ENCODE measurements at regions of chrX and their contacts with region 1.

Region 1: GRCh38 chrX:86047174-86047935 is at the start of gene CHM:
- DNase-seq: peak; percentile 60
- H3K4me3 Mint-ChIP-seq: no peak within 1 kb of the TSS
- H3K27ac Mint-ChIP-seq: no peak within 1 kb of the TSS
- H3K4me1 Mint-ChIP-seq: peaks cover 5% of the 10 kb centered on the region
- H3K27me3 Mint-ChIP-seq: no peaks in the 10 kb centered on the region
- CTCF ChIP-seq: no peak
- total RNA-seq, gene CHM: 21.0 and 24.3 TPM in 2 replicates

Region 2: DNA sequence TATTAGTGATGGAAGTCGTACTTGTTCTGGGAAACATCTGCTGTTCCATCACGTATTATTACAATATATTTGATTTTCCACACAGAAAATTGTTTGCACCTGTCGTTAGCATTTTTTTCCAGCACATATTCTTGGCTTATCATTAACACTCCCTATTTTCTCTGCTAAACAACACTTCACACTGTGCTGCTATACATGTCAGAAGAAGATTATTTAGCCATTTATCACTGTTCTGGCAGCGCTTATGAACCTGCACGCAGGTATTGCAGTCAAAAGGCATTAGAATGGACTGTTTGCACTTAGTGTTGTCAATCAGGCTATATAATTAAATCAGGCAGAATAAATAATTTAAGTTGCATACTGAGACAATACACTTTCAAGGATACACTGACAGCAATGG is 218.6 kb before region 1 on chrX:
- CTCF ChIA-PET with region 1: no interaction called
- intact Hi-C with region 1: no loop called
- DNase-seq: no peak
- H3K4me3 Mint-ChIP-seq: no peak overlapping the region
- H3K27ac Mint-ChIP-seq: no peak overlapping the region
- H3K4me1 Mint-ChIP-seq: no peaks in the 10 kb centered on the region
- H3K27me3 Mint-ChIP-seq: no peaks in the 10 kb centered on the region
- CTCF ChIP-seq: no peak

Region 3: GRCh38 chrX:85859426-85859825 is 187.9 kb before region 1 on chrX:
- CTCF ChIA-PET with region 1: no interaction called
- intact Hi-C with region 1: loop called (anchors 5 kb)
- DNase-seq: no peak
- H3K4me3 Mint-ChIP-seq: no peak overlapping the region
- H3K27ac Mint-ChIP-seq: no peak overlapping the region
- H3K4me1 Mint-ChIP-seq: no peaks in the 10 kb centered on the region
- H3K27me3 Mint-ChIP-seq: no peaks in the 10 kb centered on the region
- CTCF ChIP-seq: no peak

Region 4: DNA sequence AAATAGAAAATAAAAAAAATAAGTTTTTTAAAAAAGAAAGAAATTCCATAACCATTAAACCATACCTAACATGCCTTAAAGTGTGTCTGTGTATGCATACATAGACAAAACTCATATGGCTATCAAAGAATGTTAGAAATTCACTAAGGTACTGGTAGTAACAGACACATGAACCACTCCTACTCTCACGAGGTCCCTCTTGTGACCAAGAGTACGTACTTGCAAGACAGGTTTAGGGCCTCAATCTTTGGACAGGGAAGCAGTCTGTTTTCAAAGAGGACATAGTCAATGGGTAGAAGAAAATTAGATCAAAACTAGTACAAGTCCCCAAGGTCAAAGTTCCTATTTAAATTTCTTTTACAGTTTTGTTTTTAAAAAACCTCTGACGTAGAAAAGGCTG is 117.3 kb before region 1 on chrX:
- CTCF ChIA-PET with region 1: no interaction called
- intact Hi-C with region 1: no loop called
- DNase-seq: no peak
- H3K4me3 Mint-ChIP-seq: no peak overlapping the region
- H3K27ac Mint-ChIP-seq: no peak overlapping the region
- H3K4me1 Mint-ChIP-seq: no peaks in the 10 kb centered on the region
- H3K27me3 Mint-ChIP-seq: no peaks in the 10 kb centered on the region
- CTCF ChIP-seq: no peak

Region 5: DNA sequence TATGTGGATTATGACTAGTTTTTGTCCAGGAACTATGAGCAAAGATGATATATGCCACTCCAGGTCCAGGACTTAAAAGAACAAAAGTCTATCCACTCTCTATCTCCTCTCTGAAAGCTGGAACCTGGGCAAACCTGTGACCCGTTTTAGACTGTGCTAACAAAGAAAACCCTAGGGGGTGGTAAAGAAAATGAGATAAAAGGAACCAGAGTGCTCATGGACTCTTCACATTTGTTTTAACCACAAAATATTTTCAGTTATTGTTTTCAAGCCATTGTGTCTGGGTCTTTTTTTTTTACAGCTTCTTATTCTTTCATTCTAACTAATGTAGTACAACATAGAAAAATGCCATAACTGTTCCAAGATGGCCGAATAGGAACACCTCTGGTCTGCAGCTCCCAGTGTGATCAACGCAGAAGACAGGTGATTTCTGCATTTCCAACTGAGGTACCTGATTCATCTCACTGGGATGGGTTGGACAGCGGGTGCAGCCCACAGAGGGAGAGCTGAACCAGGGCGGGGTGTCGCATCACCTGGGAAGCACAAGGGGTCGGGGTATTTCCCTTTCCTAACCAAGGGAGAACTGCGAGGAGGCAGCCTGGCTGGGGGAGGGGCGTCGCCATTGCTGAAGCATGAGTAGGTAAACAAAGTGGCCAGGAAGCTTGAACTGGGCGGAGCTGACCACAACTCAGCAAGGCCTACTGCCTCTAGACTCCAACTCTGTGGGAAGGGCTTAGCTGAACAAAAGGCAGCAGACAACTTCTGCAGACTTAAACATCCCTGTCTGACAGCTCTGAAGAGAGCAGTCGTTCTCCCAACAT is 45.1 kb before region 1 on chrX:
- CTCF ChIA-PET with region 1: no interaction called
- intact Hi-C with region 1: loop called (anchors 2 kb)
- DNase-seq: peak; percentile 84
- H3K4me3 Mint-ChIP-seq: peak overlapping the region; percentile 64
- H3K27ac Mint-ChIP-seq: peak overlapping the region; percentile 47
- H3K4me1 Mint-ChIP-seq: peaks cover 12% of the 10 kb centered on the region
- H3K27me3 Mint-ChIP-seq: no peaks in the 10 kb centered on the region
- CTCF ChIP-seq: no peak

Region 6: GRCh38 chrX:86148024-86148511 is 100.7 kb after region 1 on chrX and contains the start of gene DACH2:
- CTCF ChIA-PET with region 1: no interaction called
- intact Hi-C with region 1: no loop called
- DNase-seq: no peak
- H3K4me3 Mint-ChIP-seq: no peak within 1 kb of the TSS
- H3K27ac Mint-ChIP-seq: no peak within 1 kb of the TSS
- H3K4me1 Mint-ChIP-seq: no peaks in the 10 kb centered on the region
- H3K27me3 Mint-ChIP-seq: peaks cover 8% of the 10 kb centered on the region
- CTCF ChIP-seq: no peak
- total RNA-seq, gene DACH2: not detected in 2 replicates